Activated CD4-positive, alpha-beta T cell treated with anti-CD3 and anti-CD28 coated beads, Interleukin-2, amount 10 ng/mL, durations not matched to agents 7 days and 5 days (primary cell): ENCODE measurements at regions of chr14 and their contacts with region 1.

Region 1: DNA sequence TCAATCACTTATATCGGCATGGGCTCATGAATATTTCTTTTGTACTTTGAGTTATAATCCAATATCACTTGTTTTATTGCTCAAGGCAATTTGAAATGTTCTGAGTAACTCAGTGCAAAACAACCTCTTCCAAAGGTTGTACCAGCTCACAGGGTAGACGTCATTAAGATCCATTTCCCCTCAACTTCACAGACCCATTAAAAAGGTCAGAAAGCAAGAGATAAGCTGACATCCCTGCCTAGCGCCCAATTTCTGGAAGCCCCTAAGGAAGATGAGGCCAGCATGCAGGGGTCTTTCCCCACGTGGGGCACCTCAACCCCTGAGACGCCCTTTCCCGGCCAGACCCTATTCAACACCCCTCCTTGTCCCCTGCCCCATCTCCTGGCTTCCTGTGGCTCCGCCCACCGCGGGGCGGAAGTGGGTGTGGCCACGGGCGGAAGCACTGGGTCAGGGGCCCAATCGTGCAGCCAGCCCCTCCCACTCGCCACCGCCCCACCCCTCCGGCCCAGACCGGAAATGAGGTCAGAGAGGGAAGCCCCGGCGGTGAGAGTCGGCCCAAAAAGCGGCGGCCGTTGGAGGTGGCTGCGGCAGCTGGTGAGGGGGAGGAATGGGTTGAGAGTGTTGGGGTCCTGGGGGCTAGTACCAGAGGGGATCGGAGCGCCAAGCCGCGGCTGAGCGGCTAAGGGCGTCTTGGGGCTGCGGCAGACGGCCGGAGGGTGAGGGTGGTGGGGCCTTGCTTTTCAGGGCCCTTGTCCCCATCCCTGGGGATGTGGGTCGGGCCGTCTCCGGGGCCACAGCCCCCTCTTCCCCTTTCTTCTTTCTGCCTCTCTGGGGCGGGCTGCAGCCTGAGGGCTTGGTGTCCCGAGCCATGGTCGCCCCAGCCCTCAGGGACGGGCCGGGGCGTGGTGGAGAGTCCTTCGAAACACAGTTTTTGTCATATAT is at the start of gene GPATCH2L:
- DNase-seq: peak; percentile 97
- H3K4me3 Mint-ChIP-seq: peak within 1 kb of the TSS; percentile 85
- H3K27ac Mint-ChIP-seq: peak within 1 kb of the TSS; percentile 98
- H3K4me1 Mint-ChIP-seq: peaks cover 53% of the 10 kb centered on the region
- H3K27me3 Mint-ChIP-seq: no peaks in the 10 kb centered on the region
- total RNA-seq, gene GPATCH2L: 41.8 to 51.9 TPM

Region 2: DNA sequence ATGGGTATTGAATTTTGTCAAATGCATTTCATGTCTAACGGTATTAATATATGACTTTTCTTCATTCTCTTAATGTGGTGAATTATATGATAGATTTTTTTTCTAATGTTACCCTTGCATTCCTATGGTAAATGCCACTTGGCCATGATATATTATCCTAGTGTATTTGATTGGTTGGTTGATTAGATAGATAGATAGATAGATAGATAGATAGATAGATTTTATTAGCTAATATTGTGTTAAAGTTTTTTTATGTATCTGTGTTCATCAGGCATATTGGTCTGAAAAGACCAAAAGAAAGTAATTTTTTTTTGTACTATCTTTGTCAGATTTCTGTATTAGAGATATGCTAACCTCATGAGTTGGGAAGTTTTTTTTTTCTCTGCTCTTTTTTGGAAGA is 294.5 kb before region 1 on chr14:
- CTCF ChIA-PET with region 1: no interaction called
- POLR2A ChIA-PET with region 1: interaction called, 10 read pairs
- DNase-seq: no peak
- H3K4me3 Mint-ChIP-seq: no peak overlapping the region
- H3K27ac Mint-ChIP-seq: peak overlapping the region; percentile 9
- H3K4me1 Mint-ChIP-seq: peaks cover 4% of the 10 kb centered on the region
- H3K27me3 Mint-ChIP-seq: no peaks in the 10 kb centered on the region